ENCODE measurements at regions of chr1 and their contacts with region 1.

Region 1: DNA sequence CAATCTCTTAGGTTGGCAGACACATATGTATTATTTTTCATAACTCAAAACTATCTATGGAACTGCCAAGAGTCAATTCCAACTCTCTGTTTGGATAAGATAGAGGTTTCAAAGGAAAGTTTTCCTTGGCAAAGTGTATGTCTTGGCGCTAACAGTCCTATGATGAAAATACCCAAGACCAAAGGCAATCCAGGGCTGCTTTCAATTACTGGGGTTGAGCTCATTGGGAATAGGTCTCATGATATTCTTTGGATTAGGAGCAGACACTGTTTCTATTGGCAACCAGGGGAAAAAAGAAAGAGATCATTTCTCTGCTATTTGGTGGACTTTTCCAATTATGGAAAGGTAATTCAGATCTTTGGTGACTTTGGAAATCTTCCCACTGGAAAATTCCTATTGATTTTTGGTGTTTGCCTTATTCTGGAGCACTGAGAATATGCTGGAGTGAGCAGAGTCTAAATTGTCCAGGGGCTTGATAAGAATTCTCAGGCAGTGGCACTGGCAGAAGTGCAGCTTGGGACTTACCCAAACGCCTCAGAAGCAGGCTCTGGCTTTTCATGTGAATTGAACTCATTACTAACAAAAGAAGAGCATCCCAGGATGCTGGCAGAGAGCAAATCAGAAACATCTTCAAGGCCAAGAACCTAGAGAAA is 20.4 kb upstream of the PLXNA2 start:
- DNase-seq: no peak
- H3K4me3 ChIP-seq: no peak overlapping the region
- H3K27ac ChIP-seq: no peak overlapping the region
- H3K4me1 ChIP-seq: peaks cover 3% of the 10 kb centered on the region
- H3K27me3 ChIP-seq: no peaks in the 10 kb centered on the region
- CTCF ChIP-seq: no peak
- EP300 ChIP-seq: no peak
- POLR2A ChIP-seq: no peak

Region 2: GRCh38 chr1:208461680-208462079 is 197.1 kb after region 1 on chr1:
- intact Hi-C with region 1: loop called in 1 of 4 experiments (anchors 10 kb)
- DNase-seq: no peak
- H3K4me3 ChIP-seq: no peak overlapping the region
- H3K27ac ChIP-seq: no peak overlapping the region
- H3K4me1 ChIP-seq: no peaks in the 10 kb centered on the region
- H3K27me3 ChIP-seq: no peaks in the 10 kb centered on the region
- CTCF ChIP-seq: no peak
- EP300 ChIP-seq: no peak
- POLR2A ChIP-seq: no peak